Activated CD4-positive, alpha-beta memory T cell treated with anti-CD3 and anti-CD28 coated beads for 36 hours (primary cell): ENCODE measurements at regions of chr2 and their contacts with region 1.

Region 1: GRCh38 chr2:210862192-210863090 is 306.0 kb downstream of the CPS1 start:
- DNase-seq: no peak
- H3K4me3 Mint-ChIP-seq: no peak overlapping the region
- H3K27ac Mint-ChIP-seq: no peak overlapping the region
- H3K4me1 Mint-ChIP-seq: no peaks in the 10 kb centered on the region
- H3K27me3 Mint-ChIP-seq: no peaks in the 10 kb centered on the region

Region 2: DNA sequence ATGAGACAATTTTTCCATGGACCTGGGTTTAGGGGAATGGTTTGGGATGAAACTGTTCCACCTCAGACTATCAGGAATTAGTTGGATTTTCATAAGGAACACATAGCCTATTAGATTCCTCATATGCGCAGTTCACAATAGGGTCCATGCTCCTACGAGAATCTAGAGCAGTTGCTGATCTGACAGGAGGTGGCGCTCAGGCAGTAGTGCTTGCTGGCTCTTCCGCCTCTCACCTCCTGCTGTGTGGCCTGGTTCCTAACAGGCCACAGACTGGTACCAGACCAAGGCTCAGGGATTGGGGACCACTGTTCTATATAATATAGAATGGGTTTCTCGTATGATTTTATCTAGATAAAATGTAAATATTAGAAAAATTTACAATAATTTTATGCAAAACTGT is 32.7 kb after region 1 on chr2:
- CTCF ChIA-PET with region 1: no interaction called
- POLR2A ChIA-PET with region 1: no interaction called
- intact Hi-C with region 1: loop called (anchors 1 kb)
- DNase-seq: no peak
- H3K4me3 Mint-ChIP-seq: no peak overlapping the region
- H3K27ac Mint-ChIP-seq: no peak overlapping the region
- H3K4me1 Mint-ChIP-seq: no peaks in the 10 kb centered on the region
- H3K27me3 Mint-ChIP-seq: no peaks in the 10 kb centered on the region

Region 3: GRCh38 chr2:210961249-210961648 is 98.8 kb after region 1 on chr2:
- CTCF ChIA-PET with region 1: no interaction called
- POLR2A ChIA-PET with region 1: no interaction called
- intact Hi-C with region 1: no loop called
- DNase-seq: no peak
- H3K4me3 Mint-ChIP-seq: no peak overlapping the region
- H3K27ac Mint-ChIP-seq: no peak overlapping the region
- H3K4me1 Mint-ChIP-seq: no peaks in the 10 kb centered on the region
- H3K27me3 Mint-ChIP-seq: no peaks in the 10 kb centered on the region